A549 (cell line): ENCODE measurements at regions of chr2 and their contacts with region 1.

Region 1: DNA sequence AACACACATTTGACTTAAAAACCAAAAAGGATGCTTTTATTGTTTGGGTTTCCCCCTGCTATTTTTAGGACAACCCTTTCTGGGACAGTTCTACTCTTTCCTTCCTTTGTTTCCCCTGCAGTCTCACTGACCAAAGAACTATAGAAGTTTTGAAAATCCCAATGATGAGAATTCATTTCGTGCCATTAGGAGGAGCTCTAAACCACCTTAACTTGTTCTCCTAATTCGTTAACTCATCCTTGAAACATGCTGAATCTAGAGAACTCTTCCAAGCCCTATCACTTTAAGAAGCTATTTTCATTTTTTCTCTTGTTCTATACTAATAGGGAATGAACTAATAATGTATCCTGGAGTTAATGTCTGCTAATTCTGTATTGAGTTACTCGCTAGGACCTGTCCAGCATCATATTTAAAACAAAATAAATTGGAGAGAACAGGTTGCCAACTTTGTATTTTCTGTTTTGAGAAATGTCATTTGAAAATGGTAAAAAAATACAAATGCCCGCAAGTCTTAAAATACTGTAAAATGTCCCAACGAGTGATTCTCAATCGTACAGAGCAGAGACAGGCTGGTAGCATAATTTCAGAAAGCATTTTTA is 62.9 kb downstream of the AFTPH start:
- DNase-seq: peak; percentile 60 to 68
- ATAC-seq: peak; percentile 82 to 83
- H3K4me3 ChIP-seq: no peak overlapping the region
- H3K27ac ChIP-seq: no peak overlapping the region
- H3K4me1 ChIP-seq: no peaks in the 10 kb centered on the region
- CTCF ChIP-seq: peak; percentile 91
- EP300 ChIP-seq: no peak
- POLR2A ChIP-seq: no peak
- RAD21 ChIP-seq: peak; percentile 83 to 89

Region 2: GRCh38 chr2:64179582-64180321 is 407.2 kb before region 1 on chr2:
- CTCF ChIA-PET with region 1: no interaction called
- POLR2A ChIA-PET with region 1: no interaction called
- DNase-seq: no peak
- ATAC-seq: no peak
- H3K4me3 ChIP-seq: no peak overlapping the region
- H3K27ac ChIP-seq: no peak overlapping the region
- H3K4me1 ChIP-seq: no peaks in the 10 kb centered on the region
- CTCF ChIP-seq: no peak
- EP300 ChIP-seq: no peak
- POLR2A ChIP-seq: no peak
- RAD21 ChIP-seq: no peak

Region 3: DNA sequence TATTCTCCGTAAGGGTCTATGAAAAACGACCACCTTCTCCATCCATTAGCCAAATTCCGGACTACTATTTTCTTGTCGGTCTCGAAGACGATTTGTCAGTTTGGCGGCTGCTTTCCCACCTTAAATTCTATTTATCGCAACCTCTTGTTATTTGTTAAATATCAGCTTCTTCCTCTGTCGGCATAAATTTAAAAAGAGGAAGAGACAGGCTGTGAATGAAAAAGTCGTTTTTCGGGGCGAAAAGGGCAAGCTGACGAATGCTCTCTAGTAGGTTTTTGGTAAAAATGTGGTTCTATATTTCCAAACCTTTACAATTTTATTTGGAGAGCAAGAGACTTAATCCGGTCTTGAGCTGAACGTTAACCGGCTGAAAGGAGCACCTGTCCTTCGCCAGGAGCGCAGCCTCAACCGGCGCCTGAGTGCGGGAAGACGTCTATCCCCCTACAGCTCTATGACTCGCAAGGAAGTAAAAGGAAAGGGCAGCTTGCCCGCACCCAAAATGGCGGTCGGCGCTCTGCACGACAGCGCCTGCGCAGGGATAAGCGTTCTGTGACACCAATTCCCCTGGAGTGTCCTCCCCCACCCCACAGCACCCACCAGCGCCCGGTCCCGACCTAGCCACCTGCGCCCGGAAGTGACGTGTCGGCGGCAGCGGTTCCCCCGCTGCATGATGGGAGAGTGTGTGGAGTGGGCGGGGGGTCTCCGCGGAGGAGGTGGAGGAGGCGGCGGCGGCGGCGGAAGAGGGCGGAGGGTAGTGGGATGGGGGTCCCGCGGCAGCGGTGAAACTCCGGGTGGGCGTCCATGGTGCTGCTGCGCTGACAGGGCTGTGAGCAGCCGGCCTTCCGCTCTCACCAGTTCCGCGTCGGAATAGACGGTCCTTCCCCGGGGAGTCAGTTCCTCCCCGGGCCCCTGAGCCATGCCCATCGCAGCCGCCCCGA is 63.0 kb before region 1 on chr2 and contains the start of gene AFTPH:
- CTCF ChIA-PET with region 1: interaction called, 16 read pairs
- POLR2A ChIA-PET with region 1: no interaction called
- DNase-seq: peak; percentile 98 to 99
- ATAC-seq: peak; percentile 95 to 98
- H3K4me3 ChIP-seq: peak within 1 kb of the TSS; percentile 89
- H3K27ac ChIP-seq: peak within 1 kb of the TSS; percentile 86 to 96
- H3K4me1 ChIP-seq: peaks cover 15% of the 10 kb centered on the region; the same call in 2 of the 3 replicates
- CTCF ChIP-seq: no peak; the same call in 2 of the 3 replicates
- EP300 ChIP-seq: no peak
- POLR2A ChIP-seq: peak; percentile 61
- RAD21 ChIP-seq: no peak
- polyA plus RNA-seq, gene AFTPH: 51.4 and 56.6 TPM in 2 replicates

Region 4: GRCh38 chr2:64574871-64575270 is 12.1 kb before region 1 on chr2:
- CTCF ChIA-PET with region 1: interaction called, 14 read pairs
- POLR2A ChIA-PET with region 1: no interaction called
- DNase-seq: no peak
- ATAC-seq: no peak
- H3K4me3 ChIP-seq: no peak overlapping the region
- H3K27ac ChIP-seq: no peak overlapping the region
- H3K4me1 ChIP-seq: no peaks in the 10 kb centered on the region
- CTCF ChIP-seq: no peak
- EP300 ChIP-seq: no peak
- POLR2A ChIP-seq: no peak
- RAD21 ChIP-seq: no peak

Region 5: GRCh38 chr2:64622443-64623241 is 35.7 kb after region 1 on chr2:
- CTCF ChIA-PET with region 1: interaction called, 15 read pairs
- POLR2A ChIA-PET with region 1: no interaction called
- DNase-seq: no peak
- ATAC-seq: peak in 1 of 2 experiments; percentile 8; a peak in 2 of 6 replicates
- H3K4me3 ChIP-seq: no peak overlapping the region
- H3K27ac ChIP-seq: no peak overlapping the region
- H3K4me1 ChIP-seq: no peaks in the 10 kb centered on the region
- CTCF ChIP-seq: no peak
- EP300 ChIP-seq: no peak
- POLR2A ChIP-seq: no peak
- RAD21 ChIP-seq: no peak

Region 6: DNA sequence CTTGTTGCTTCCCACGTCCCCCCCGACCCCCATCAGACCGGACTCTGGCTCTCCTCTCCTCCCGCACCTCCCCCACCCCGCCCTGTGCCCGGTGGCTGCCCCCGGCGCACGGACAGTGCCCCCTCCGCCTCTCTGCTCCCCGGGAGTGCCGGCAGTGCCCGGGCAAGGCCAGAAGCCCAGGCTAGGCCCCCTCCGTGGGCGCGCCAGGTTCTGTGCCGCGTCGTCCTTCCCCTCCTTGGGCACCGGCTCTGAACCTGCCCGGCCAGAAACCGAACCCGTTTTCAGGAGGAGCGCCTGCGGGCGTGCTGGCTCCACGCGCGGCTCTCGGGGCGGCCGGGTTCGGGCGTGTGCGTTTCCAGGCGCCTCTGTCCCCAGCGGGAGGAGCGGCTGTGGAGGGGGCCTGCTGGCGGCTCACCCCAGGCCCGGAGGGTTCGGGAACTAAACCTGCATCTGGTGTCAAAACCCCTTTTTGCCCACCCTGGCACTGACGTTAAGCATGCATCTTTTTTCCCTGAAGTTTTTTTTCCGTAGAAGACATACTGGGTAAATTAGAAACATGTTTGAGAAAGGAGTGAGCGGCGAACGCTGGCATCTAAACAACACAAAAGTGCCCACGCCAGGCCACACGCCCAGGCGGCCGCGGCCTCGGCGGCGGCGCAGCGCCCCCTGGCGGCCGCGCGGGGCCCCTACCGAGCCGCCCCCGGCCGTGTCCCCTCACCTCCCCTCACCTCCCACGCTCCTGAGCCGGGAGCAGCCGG is 278.3 kb after region 1 on chr2:
- CTCF ChIA-PET with region 1: interaction called, 60 read pairs
- POLR2A ChIA-PET with region 1: interaction called, 6 read pairs
- DNase-seq: peak; percentile 69 to 76
- ATAC-seq: peak; percentile 86 to 95
- H3K4me3 ChIP-seq: peak overlapping the region; percentile 62
- H3K27ac ChIP-seq: peak overlapping the region; percentile 85 to 92
- H3K4me1 ChIP-seq: peaks cover 20% of the 10 kb centered on the region
- CTCF ChIP-seq: peak; percentile 99
- EP300 ChIP-seq: no peak
- POLR2A ChIP-seq: no peak
- RAD21 ChIP-seq: peak; percentile 69 to 99

Region 7: GRCh38 chr2:64888591-64889309 is 301.8 kb after region 1 on chr2:
- CTCF ChIA-PET with region 1: interaction called, 19 read pairs
- POLR2A ChIA-PET with region 1: no interaction called
- DNase-seq: peak; percentile 83 to 85
- ATAC-seq: peak; percentile 94 to 97
- H3K4me3 ChIP-seq: no peak overlapping the region
- H3K27ac ChIP-seq: no peak overlapping the region
- H3K4me1 ChIP-seq: 0 out of 3 replicates have a peak, but pooled peaks cover 3% of the 10 kb centered on the region
- CTCF ChIP-seq: peak; percentile 80
- EP300 ChIP-seq: no peak
- POLR2A ChIP-seq: no peak
- RAD21 ChIP-seq: peak; percentile 90 to 91

Region 8: GRCh38 chr2:64952511-64953482 is 365.8 kb after region 1 on chr2:
- CTCF ChIA-PET with region 1: no interaction called
- POLR2A ChIA-PET with region 1: no interaction called
- DNase-seq: peak; percentile 51 to 70
- ATAC-seq: peak; percentile 77 to 88; a peak in 5 of 6 replicates
- H3K4me3 ChIP-seq: no peak overlapping the region
- H3K27ac ChIP-seq: peak overlapping the region; percentile 44 to 50; a peak in 4 of 6 replicates
- H3K4me1 ChIP-seq: peaks cover 37% of the 10 kb centered on the region
- CTCF ChIP-seq: no peak
- EP300 ChIP-seq: no peak
- POLR2A ChIP-seq: no peak
- RAD21 ChIP-seq: no peak